Activated naive CD4-positive, alpha-beta T cell treated with anti-CD3 and anti-CD28 coated beads, Interleukin-2, amount 10 ng/mL, durations not matched to agents 7 days and 5 days (primary cell): ENCODE measurements at regions of chr5 and their contacts with region 1.

Region 1: DNA sequence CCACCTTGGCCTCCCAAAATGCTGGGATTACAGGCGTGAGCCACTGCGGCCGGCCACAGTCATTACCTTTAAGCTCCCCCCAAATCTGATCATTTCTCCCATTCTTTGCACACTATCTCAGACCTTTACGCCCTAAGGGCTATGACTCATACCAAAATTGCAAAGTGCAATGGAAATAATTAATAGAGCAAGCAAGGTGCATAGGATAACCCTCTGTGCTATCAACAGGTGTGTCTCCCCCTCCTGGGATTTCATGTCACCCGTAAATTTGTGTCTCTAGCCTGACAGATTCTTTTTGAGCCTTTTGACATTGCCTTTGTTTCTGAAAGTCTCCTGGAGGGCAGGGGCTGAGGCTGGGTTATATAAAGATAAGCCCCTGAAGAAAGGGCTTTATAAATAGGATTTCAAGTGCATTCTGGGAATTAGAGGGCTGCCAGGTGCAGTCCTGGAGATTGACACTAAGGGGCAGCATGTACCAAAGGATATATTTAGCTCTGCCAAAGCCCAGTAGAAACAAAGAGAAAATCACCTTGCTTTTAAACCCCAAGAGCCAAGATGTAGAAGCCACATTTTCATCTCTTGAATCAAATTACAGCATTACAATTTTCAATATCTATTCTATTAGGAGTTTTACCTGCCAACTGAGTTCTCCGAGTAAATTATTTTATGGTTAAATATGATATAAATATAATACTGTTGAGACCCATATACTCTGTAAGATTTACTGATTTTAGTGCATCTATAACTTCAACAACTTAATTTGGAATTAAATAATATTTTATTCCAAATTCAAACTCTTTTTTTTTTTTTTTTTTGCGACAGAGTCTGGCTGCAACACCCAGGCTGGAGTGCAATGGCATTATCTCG is 18.2 kb downstream of the S100Z start:
- DNase-seq: peak; percentile 75
- H3K4me3 Mint-ChIP-seq: no peak overlapping the region
- H3K27ac Mint-ChIP-seq: no peak overlapping the region
- H3K4me1 Mint-ChIP-seq: no peaks in the 10 kb centered on the region
- H3K27me3 Mint-ChIP-seq: no peaks in the 10 kb centered on the region

Region 2: DNA sequence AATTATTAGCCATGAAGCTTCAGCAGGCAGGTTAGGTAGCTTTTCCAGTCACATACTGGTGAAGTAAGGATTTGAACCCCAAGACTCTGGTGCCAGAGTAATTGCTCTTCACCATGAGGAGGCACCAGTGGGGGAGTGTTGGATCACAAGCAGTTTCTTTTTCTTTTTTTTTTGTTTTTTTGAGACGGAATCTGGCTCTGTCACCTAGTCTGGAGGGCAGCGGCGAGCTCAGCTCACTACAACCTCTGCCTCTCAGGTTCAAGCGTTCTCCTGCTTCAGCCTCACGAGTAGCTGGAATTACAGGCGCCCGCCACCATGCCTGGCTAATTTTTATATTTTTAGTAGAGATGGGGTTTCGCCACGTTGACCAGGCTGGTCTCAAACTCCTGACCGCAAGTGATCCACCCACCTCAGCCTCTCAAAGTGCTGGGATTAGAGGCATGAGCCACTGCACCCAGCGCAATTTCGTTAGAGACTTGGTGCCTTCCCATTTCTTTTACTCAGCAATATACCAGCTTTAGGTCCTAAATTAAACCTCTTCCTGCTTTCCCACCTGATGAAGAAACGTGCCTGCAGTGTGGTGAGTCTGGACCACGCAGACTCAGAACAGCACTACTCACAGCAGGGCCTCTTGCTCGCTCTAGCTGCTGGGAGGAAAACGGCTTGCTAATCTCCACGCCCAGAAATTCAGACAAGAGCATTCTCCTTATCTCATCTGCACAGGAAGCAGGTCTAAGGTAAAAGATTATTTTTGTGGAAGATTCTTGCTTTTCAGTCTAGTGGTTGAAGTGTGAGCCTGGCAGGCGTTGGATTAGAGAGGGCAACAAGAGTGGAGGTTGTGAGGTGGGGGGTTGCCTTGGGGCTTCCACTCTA is 18.4 kb before region 1 on chr5 and contains the start of gene S100Z:
- CTCF ChIA-PET with region 1: no interaction called
- DNase-seq: peak; percentile 67
- H3K4me3 Mint-ChIP-seq: peak within 1 kb of the TSS; percentile 52
- H3K27ac Mint-ChIP-seq: peak within 1 kb of the TSS; percentile 81
- H3K4me1 Mint-ChIP-seq: peaks cover 56% of the 10 kb centered on the region
- H3K27me3 Mint-ChIP-seq: no peaks in the 10 kb centered on the region

Region 3: GRCh38 chr5:77015938-77016569 is 148.0 kb after region 1 on chr5:
- CTCF ChIA-PET with region 1: interaction called, 31 read pairs
- DNase-seq: no peak
- H3K4me3 Mint-ChIP-seq: no peak overlapping the region
- H3K27ac Mint-ChIP-seq: no peak overlapping the region
- H3K4me1 Mint-ChIP-seq: peaks cover 11% of the 10 kb centered on the region
- H3K27me3 Mint-ChIP-seq: peaks cover 21% of the 10 kb centered on the region

Region 4: GRCh38 chr5:77076961-77077823 is 209.1 kb after region 1 on chr5:
- CTCF ChIA-PET with region 1: interaction called, 23 read pairs
- DNase-seq: peak; percentile 68
- H3K4me3 Mint-ChIP-seq: peak overlapping the region; percentile 59
- H3K27ac Mint-ChIP-seq: no peak overlapping the region
- H3K4me1 Mint-ChIP-seq: peaks cover 2% of the 10 kb centered on the region
- H3K27me3 Mint-ChIP-seq: peaks cover 3% of the 10 kb centered on the region